ENCODE measurements at regions of chr9 and their contacts with region 1.

Region 1: DNA sequence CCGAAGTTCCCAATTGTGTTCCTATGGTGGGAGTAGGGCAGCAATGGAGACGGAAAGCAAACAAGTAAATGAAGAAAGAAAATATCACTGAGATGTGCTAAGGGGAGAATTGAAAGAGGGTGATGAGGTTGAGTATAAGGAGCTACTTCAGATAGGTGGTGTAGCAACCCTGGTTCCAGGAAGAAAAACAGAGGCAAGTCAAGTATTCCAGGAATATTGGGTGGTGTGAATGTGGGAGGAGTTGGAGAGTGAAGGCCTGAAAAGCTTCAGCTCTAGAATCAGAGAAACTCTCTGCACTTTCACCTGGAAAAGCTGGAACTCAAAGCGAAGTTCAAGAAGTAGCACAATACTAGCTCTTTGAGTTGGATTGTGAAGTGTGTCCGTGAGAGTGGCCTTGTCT is 342.1 kb downstream of the TLE4 start:
- DNase-seq: no peak
- H3K4me3 ChIP-seq: no peak overlapping the region
- H3K27ac ChIP-seq: no peak overlapping the region
- H3K4me1 ChIP-seq: no peaks in the 10 kb centered on the region
- H3K27me3 ChIP-seq: peaks cover 10% of the 10 kb centered on the region; the same call in 1 of the 2 replicates
- CTCF ChIP-seq: no peak

Region 2: GRCh38 chr9:79847074-79847473 is 66.8 kb before region 1 on chr9:
- CTCF ChIA-PET with region 1: no interaction called
- POLR2A ChIA-PET with region 1: interaction called, 10 read pairs
- intact Hi-C with region 1: no loop called
- DNase-seq: no peak
- H3K4me3 ChIP-seq: no peak overlapping the region
- H3K27ac ChIP-seq: no peak overlapping the region
- H3K4me1 ChIP-seq: no peaks in the 10 kb centered on the region
- H3K27me3 ChIP-seq: no peaks in the 10 kb centered on the region
- CTCF ChIP-seq: no peak

Region 3: GRCh38 chr9:79962836-79963235 is 49.0 kb after region 1 on chr9:
- CTCF ChIA-PET with region 1: no interaction called
- POLR2A ChIA-PET with region 1: no interaction called
- intact Hi-C with region 1: no loop called
- DNase-seq: no peak
- H3K4me3 ChIP-seq: no peak overlapping the region
- H3K27ac ChIP-seq: no peak overlapping the region
- H3K4me1 ChIP-seq: no peaks in the 10 kb centered on the region
- H3K27me3 ChIP-seq: peaks cover 27% of the 10 kb centered on the region
- CTCF ChIP-seq: no peak

Region 4: GRCh38 chr9:80117031-80117430 is 203.2 kb after region 1 on chr9:
- CTCF ChIA-PET with region 1: no interaction called
- POLR2A ChIA-PET with region 1: no interaction called
- intact Hi-C with region 1: no loop called
- DNase-seq: no peak
- H3K4me3 ChIP-seq: no peak overlapping the region
- H3K27ac ChIP-seq: no peak overlapping the region
- H3K4me1 ChIP-seq: no peaks in the 10 kb centered on the region
- H3K27me3 ChIP-seq: no peaks in the 10 kb centered on the region
- CTCF ChIP-seq: no peak